Head of caudate nucleus (tissue), 42 donors: ENCODE measurements at regions of chr12 and their contacts with region 1.

Region 1: GRCh38 chr12:47779301-47779942 is 6.4 kb downstream of the SLC48A1 start:
- DNase-seq: peak in 41 of 42 donors; percentile 88 to 98 (median 94)

Region 2: GRCh38 chr12:47715393-47715876 is 64.0 kb before region 1 on chr12:
- intact Hi-C with region 1: loop called (anchors 2 kb)
- DNase-seq: peak; percentile 76 to 97 (median 91)

Region 3: DNA sequence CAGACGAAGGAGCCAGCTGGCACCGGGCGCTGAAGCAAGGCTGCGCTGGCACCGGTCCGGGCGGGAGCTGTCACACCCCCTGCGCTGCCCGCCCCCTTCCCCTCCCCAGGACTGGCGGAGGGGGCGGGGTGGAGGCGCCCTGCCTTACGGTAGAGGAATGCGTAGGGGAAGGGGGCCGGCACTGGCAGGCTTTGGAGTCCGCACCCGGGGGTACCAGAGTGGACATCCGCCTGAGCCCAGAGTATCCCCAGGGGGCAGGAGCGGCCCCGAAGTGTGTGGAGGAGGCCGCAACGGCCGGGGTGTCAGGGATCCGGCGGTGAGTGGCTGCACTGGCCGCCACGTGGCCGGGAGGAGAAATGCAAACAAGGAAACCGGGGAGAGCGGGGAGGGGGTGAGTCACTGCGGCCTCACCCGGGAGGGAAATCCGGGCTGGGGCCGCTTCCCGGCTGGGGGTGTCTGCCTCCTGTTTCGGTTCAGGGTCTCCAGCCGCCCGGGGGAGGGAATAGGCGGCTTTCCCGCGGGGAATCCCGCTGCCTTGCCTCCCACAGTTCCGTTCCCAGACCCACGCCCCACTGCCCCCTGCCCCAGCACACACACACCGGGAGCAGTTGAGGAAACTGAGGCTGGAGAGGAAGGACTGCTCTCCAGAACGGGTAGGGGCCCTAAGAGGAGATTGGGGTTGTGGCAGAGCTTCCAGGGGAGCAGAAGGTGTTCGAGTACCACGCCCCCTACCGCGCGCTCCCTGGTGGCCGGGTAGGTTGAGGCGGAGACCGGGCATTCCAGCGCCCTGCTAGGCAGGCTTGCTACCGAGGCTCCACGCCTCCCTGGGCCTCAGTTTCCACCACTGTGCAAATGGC is 20.4 kb before region 1 on chr12 and contains the start of gene RAPGEF3:
- intact Hi-C with region 1: loop called (anchors 2 kb)
- DNase-seq: peak; percentile 73 to 95 (median 90)

Region 4: DNA sequence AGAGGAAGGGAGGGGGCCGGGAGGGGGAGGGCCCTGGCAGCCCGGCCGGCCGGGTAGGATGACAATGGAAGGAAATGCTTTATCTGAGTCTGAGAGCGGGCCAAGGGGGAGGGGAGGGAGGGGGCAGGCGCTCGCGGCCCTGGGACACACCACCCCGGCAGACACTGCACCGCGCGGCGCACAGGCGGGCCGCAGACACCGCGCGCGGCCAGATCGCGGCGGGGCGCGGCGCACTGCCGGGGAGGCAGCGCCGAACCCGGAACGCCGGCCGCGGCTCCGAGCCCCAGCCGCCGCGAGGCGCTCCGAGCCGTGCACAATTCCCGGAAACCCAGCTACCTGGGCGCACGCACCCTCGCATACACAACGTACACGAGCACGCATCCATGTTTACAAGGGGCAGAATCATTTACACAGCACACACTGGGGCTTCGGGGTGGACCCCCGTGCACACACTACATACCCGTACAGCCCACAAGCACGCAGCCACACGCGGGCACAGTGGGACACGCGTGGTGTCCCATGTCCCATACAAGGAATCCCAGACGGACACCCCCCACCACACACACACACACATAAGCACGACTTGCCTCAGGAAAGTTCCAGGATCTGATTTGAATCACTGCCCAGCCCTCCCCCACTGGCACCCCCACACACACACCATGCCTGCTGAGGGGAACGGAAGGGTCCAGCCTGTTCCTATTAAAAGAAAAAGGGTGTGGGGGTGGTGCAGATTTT is 40.6 kb after region 1 on chr12 and contains the start of gene HDAC7:
- intact Hi-C with region 1: loop called (anchors 1 kb)
- DNase-seq: peak; percentile 45 to 93 (median 78)

Region 5: GRCh38 chr12:47904713-47905310 is 125.4 kb after region 1 on chr12 and contains the start of gene VDR:
- intact Hi-C with region 1: no loop called
- DNase-seq: peak in 33 of 42 donors; percentile 14 to 65 (median 37)